Psoas muscle (tissue), 8 donors: ENCODE measurements at regions of chr3 and their contacts with region 1.

Region 1: GRCh38 chr3:30611613-30612436 is 5.4 kb downstream of the TGFBR2 start:
- DNase-seq: no peak
- ATAC-seq: peak in 3 of 4 donors; percentile 31 to 61 (median 55)
- H3K4me3 ChIP-seq: peak overlapping the region; percentile 15
- H3K27ac ChIP-seq: peak overlapping the region; percentile 25
- H3K4me1 ChIP-seq: peaks cover 47% of the 10 kb centered on the region
- H3K27me3 ChIP-seq: no peaks in the 10 kb centered on the region
- CTCF ChIP-seq: no peak

Region 2: DNA sequence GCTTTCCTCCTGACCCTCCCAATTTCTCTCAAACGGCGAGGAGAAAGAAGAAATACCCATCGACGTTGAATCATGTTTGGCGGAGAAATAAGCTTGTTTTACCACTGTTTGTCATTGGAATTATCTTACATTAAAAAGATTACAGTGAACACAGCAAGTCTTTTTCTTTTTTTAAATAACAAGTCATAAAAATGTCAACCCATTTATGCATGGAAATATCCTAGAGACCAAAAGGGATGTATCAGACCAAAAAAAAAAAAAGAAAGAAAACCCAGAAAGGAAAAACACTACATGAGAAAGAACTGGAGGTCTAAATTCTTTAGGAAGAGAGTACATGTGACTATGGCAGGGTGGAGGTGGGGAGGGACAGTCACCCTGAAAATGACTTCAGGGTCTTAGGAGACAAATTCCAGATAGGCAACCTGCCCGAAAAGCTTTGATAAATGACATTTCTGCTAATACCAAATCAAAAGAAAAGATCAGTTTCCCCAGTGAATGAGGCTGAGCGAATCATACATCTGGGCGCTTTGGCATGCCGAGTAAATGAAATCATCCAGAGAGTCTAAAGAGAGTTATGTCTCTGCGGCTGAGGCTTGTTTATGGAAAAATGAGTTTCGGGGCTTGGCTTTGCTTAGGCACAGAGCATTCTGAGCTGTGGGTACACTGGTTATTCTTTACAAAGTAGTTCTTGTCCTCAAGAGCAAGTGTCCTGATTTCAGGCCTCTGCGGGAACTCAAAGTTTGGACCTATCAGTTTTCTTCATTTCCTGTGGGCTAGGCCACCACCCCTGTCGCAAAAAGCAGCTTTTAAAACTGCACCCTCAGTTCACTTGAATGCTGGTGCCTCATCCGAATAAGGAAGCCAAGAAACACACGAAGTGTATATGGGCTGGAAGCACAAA is 115.5 kb before region 1 on chr3:
- intact Hi-C with region 1: loop called in 1 of 2 experiments (anchors 5 kb)
- DNase-seq: peak in 1 of 2 donors; percentile 22
- ATAC-seq: peak; percentile 30 to 68 (median 48)
- H3K4me3 ChIP-seq: peak overlapping the region; percentile 13
- H3K27ac ChIP-seq: peak overlapping the region; percentile 54
- H3K4me1 ChIP-seq: peaks cover 17% of the 10 kb centered on the region
- H3K27me3 ChIP-seq: no peaks in the 10 kb centered on the region
- CTCF ChIP-seq: no peak